ENCODE measurements at regions of chr2 and their contacts with region 1.

Region 1: GRCh38 chr2:86105252-86105968 is at the start of gene POLR1A:
- DNase-seq: peak; percentile 64 to 94 (median 83)
- ATAC-seq: peak; percentile 77
- H3K4me3 ChIP-seq: peak within 1 kb of the TSS; percentile 66 to 92
- H3K4me3 Mint-ChIP-seq: peak within 1 kb of the TSS; percentile 92
- H3K27ac ChIP-seq: peak within 1 kb of the TSS; percentile 80 to 87
- H3K27ac Mint-ChIP-seq: peak within 1 kb of the TSS; percentile 99
- H3K4me1 ChIP-seq: peaks cover 24% of the 10 kb centered on the region
- H3K4me1 Mint-ChIP-seq: peaks cover 66% of the 10 kb centered on the region
- H3K27me3 ChIP-seq: no peaks in the 10 kb centered on the region
- H3K27me3 Mint-ChIP-seq: no peaks in the 10 kb centered on the region
- CTCF ChIP-seq: no peak
- total RNA-seq, gene POLR1A: 12.3 to 15.2 TPM

Region 2: DNA sequence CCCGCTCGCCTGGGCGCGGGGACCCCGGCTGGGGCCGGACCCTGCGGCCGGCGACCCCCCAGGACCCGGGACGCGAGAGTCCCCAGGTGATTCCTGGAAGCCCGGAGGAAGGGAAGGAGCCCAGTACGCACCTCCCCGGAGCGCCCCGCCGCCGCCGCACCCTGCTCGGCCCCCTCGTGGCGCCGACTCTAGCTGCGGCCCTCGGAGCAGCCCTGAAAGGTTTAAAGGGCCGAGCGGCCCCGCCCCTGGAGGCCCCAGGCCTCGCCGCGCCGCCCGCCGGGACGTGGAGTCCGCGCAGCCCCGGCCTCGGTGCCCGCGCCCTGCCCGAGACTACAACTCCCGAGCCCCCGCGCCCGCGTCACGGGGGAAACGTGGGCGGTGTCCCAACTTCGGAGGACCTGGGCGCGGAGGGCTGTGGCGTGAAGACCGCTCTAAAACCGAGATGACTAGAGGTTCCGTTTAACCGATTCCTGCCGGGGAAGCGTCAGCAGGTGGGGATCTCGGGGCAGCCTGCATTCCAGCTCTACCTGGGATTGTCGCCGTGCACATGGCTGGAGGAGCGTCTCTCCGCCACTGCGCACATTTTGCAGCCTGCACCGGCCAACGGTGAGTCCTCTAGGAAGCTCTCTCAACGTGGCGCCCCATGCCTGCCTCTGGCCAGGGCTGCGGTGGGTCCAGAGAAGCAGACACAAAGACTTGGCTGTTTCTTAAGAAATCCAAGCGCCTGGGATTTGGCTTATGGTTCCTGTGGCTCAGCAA is 502.8 kb before region 1 on chr2 and contains the start of gene TMEM150A:
- CTCF ChIA-PET with region 1: no interaction called
- POLR2A ChIA-PET with region 1: interaction called, 4 read pairs
- intact Hi-C with region 1: loop called in 1 of 2 experiments (anchors 5 kb)
- DNase-seq: peak; percentile 71 to 93 (median 87)
- ATAC-seq: peak; percentile 91
- H3K4me3 ChIP-seq: peak within 1 kb of the TSS; percentile 92 to 97
- H3K4me3 Mint-ChIP-seq: peak within 1 kb of the TSS; percentile 91
- H3K27ac ChIP-seq: peak within 1 kb of the TSS; percentile 58 to 67
- H3K27ac Mint-ChIP-seq: peak within 1 kb of the TSS; percentile 89
- H3K4me1 ChIP-seq: peaks cover 27% of the 10 kb centered on the region
- H3K4me1 Mint-ChIP-seq: peaks cover 37% of the 10 kb centered on the region
- H3K27me3 ChIP-seq: no peaks in the 10 kb centered on the region
- H3K27me3 Mint-ChIP-seq: no peaks in the 10 kb centered on the region
- CTCF ChIP-seq: no peak
- total RNA-seq, gene TMEM150A: 5.7 to 6.0 TPM

Region 3: DNA sequence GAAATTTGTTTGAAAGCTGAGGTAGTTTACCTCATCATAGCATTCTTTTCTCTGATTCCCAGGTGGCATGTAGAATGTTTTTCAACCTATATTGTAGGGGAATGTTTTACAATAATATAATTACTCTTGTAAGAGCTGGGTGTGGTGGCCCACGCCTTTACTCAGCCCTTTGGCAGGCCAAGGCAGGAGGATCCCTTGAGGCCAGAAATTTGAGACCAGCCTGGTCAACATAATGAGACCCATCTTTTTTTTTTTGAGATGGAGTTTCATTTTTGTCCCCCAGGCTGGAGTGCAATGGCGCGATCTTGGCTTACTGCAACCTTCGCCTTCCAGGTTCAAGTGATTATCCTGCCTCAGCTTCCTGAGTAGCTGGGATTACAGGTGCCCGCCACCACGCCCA is 485.8 kb before region 1 on chr2:
- CTCF ChIA-PET with region 1: no interaction called
- POLR2A ChIA-PET with region 1: no interaction called
- intact Hi-C with region 1: loop called in 1 of 2 experiments (anchors 5 kb)
- DNase-seq: no peak
- ATAC-seq: no peak
- H3K4me3 ChIP-seq: no peak overlapping the region
- H3K4me3 Mint-ChIP-seq: no peak overlapping the region
- H3K27ac ChIP-seq: no peak overlapping the region
- H3K27ac Mint-ChIP-seq: no peak overlapping the region
- H3K4me1 ChIP-seq: peaks cover 20% of the 10 kb centered on the region
- H3K4me1 Mint-ChIP-seq: peaks cover 32% of the 10 kb centered on the region
- H3K27me3 ChIP-seq: no peaks in the 10 kb centered on the region
- H3K27me3 Mint-ChIP-seq: no peaks in the 10 kb centered on the region
- CTCF ChIP-seq: no peak

Region 4: GRCh38 chr2:85888684-85889626 is 216.5 kb before region 1 on chr2 and contains the start of gene ST3GAL5:
- CTCF ChIA-PET with region 1: interaction called, 4 read pairs
- POLR2A ChIA-PET with region 1: interaction called, 15 read pairs
- intact Hi-C with region 1: loop called in 1 of 2 experiments (anchors 1 kb)
- DNase-seq: peak; percentile 84 to 98 (median 95)
- ATAC-seq: peak; percentile 85
- H3K4me3 ChIP-seq: peak within 1 kb of the TSS; percentile 89 to 96
- H3K4me3 Mint-ChIP-seq: peak within 1 kb of the TSS; percentile 95
- H3K27ac ChIP-seq: peak within 1 kb of the TSS; percentile 83 to 84
- H3K27ac Mint-ChIP-seq: peak within 1 kb of the TSS; percentile 97
- H3K4me1 ChIP-seq: peaks cover 59% of the 10 kb centered on the region
- H3K4me1 Mint-ChIP-seq: peaks cover 77% of the 10 kb centered on the region
- H3K27me3 ChIP-seq: no peaks in the 10 kb centered on the region
- H3K27me3 Mint-ChIP-seq: no peaks in the 10 kb centered on the region
- CTCF ChIP-seq: peak; percentile 71
- total RNA-seq, gene ST3GAL5: 110 to 115 TPM

Region 5: GRCh38 chr2:86185517-86186212 is 80.3 kb after region 1 on chr2:
- CTCF ChIA-PET with region 1: interaction called, 4 read pairs
- POLR2A ChIA-PET with region 1: interaction called, 10 read pairs
- intact Hi-C with region 1: no loop called
- DNase-seq: peak in 2 of 9 experiments; percentile 50 to 74
- ATAC-seq: peak; percentile 69
- H3K4me3 ChIP-seq: no peak overlapping the region
- H3K4me3 Mint-ChIP-seq: peak overlapping the region; percentile 58
- H3K27ac ChIP-seq: peak overlapping the region; percentile 29 to 82
- H3K27ac Mint-ChIP-seq: peak overlapping the region; percentile 91
- H3K4me1 ChIP-seq: peaks cover 44% of the 10 kb centered on the region
- H3K4me1 Mint-ChIP-seq: peaks cover 68% of the 10 kb centered on the region
- H3K27me3 ChIP-seq: no peaks in the 10 kb centered on the region
- H3K27me3 Mint-ChIP-seq: no peaks in the 10 kb centered on the region
- CTCF ChIP-seq: no peak

Region 6: DNA sequence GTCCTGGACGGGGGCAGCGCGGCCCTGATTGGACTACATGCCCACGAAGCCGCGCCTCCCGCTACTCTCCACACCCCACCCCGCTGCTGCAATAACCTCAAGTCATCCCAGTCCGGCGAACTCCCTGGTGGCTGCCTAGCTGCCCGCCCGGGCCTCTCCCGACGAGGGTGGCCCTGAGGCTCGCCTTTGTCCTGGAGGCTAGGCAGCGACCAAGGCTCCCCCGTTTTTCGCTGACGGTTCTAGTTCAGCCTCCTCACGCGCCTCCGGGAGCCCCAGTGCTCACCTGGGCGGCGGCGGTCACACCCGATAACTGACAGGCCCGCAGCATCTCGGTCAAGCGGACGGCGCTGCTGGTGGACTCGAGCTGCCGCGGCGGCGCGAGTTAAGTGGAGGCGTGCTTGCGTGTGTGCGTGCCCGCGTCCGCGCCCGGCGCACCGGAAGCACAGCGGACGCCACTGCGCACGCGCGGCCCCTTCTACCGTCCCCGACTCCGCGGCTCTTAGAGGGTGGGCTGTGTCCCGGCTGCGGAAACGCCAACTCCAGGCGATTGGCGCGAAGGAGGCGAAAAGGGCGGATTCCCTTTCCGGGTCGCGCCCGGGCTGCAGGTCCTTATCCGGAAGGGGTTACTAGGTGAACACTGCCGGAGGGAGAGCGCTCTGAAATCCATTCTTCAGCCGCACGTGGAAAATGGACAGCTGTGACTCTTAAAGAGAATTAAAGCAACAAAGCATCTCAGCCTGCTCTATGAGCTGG is 89.8 kb after region 1 on chr2 and contains the start of gene IMMT:
- CTCF ChIA-PET with region 1: no interaction called
- POLR2A ChIA-PET with region 1: interaction called, 4 read pairs
- intact Hi-C with region 1: loop called (anchors 1 to 2 kb)
- DNase-seq: peak; percentile 79 to 97 (median 93)
- ATAC-seq: peak; percentile 90
- H3K4me3 ChIP-seq: peak within 1 kb of the TSS; percentile 96 to 98
- H3K4me3 Mint-ChIP-seq: peak within 1 kb of the TSS; percentile 89
- H3K27ac ChIP-seq: peak within 1 kb of the TSS; percentile 91 to 98
- H3K27ac Mint-ChIP-seq: peak within 1 kb of the TSS; percentile 90
- H3K4me1 ChIP-seq: peaks cover 37% of the 10 kb centered on the region
- H3K4me1 Mint-ChIP-seq: peaks cover 63% of the 10 kb centered on the region
- H3K27me3 ChIP-seq: no peaks in the 10 kb centered on the region
- H3K27me3 Mint-ChIP-seq: no peaks in the 10 kb centered on the region
- CTCF ChIP-seq: no peak
- total RNA-seq, gene IMMT: 34.3 to 35.8 TPM

Region 7: GRCh38 chr2:86314125-86314524 is 208.7 kb after region 1 on chr2:
- CTCF ChIA-PET with region 1: no interaction called
- POLR2A ChIA-PET with region 1: no interaction called
- intact Hi-C with region 1: no loop called
- DNase-seq: no peak
- ATAC-seq: no peak
- H3K4me3 ChIP-seq: no peak overlapping the region
- H3K4me3 Mint-ChIP-seq: no peak overlapping the region
- H3K27ac ChIP-seq: no peak overlapping the region
- H3K27ac Mint-ChIP-seq: no peak overlapping the region
- H3K4me1 ChIP-seq: no peaks in the 10 kb centered on the region
- H3K4me1 Mint-ChIP-seq: peaks cover 3% of the 10 kb centered on the region
- H3K27me3 ChIP-seq: no peaks in the 10 kb centered on the region
- H3K27me3 Mint-ChIP-seq: peaks cover 5% of the 10 kb centered on the region
- CTCF ChIP-seq: no peak

Region 8: DNA sequence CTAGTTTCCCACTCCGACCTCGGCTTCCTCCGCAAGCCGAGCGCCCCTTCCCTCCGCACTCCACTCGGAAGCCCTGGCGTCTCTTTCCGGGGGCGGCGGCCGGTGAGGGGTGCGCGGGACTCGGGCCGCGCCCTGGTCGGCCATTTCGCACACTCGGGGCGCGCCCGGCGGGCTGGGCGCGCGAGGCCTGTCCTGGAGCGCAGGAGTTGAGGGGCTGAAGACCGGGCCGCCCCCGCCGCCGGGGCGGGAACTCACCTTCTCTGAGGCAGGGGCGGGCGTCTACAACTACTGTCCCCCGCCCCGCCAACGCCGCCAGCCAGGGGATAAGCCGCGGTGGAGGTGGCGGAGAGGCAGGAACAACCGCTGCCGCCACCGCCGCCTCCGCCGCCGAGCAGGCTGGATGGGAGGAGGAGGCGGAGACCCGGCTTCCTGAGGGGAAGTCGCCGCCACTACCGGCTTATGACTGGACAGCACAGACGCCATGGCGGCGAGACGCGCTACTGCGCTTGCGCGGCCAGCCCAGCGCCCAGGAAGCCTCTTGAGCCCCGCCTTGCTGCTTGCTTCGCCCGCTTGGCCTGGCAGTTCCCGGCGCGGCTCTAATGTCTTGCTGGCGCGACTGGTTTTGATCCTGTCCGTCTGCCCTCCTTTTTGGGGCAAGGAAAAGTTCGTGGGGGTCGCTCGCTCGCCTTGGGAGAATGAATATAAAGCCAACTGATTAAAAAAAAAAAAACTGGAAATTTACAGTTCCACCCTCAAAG is 1950.1 kb after region 1 on chr2 and contains the start of gene KRCC1:
- CTCF ChIA-PET with region 1: no interaction called
- POLR2A ChIA-PET with region 1: no interaction called
- intact Hi-C with region 1: loop called in 1 of 2 experiments (anchors 10 kb)
- DNase-seq: peak; percentile 86 to 98 (median 94)
- ATAC-seq: peak; percentile 91
- H3K4me3 ChIP-seq: peak within 1 kb of the TSS; percentile 57 to 84
- H3K4me3 Mint-ChIP-seq: peak within 1 kb of the TSS; percentile 96
- H3K27ac ChIP-seq: peak within 1 kb of the TSS; percentile 80 to 90
- H3K27ac Mint-ChIP-seq: peak within 1 kb of the TSS; percentile 98
- H3K4me1 ChIP-seq: peaks cover 23% of the 10 kb centered on the region
- H3K4me1 Mint-ChIP-seq: peaks cover 54% of the 10 kb centered on the region
- H3K27me3 ChIP-seq: no peaks in the 10 kb centered on the region
- H3K27me3 Mint-ChIP-seq: no peaks in the 10 kb centered on the region
- CTCF ChIP-seq: no peak
- total RNA-seq, gene KRCC1: 3.1 to 3.6 TPM